Activated CD8-positive, alpha-beta T cell treated with anti-CD3 and anti-CD28 coated beads, Interleukin-2, amount 10 ng/mL, durations not matched to agents 7 days and 5 days (primary cell): ENCODE measurements at regions of chr11 and their contacts with region 1.

Region 1: GRCh38 chr11:62805076-62805892 is at the start of gene NXF1:
- DNase-seq: peak; percentile 95
- ATAC-seq: peak; percentile 81
- H3K4me3 Mint-ChIP-seq: peak within 1 kb of the TSS; percentile 99
- H3K27ac Mint-ChIP-seq: peak within 1 kb of the TSS; percentile 95
- H3K4me1 Mint-ChIP-seq: peaks cover 37% of the 10 kb centered on the region
- H3K27me3 Mint-ChIP-seq: no peaks in the 10 kb centered on the region
- total RNA-seq, gene NXF1: 110 to 111 TPM

Region 2: GRCh38 chr11:62753736-62754603 is 51.3 kb before region 1 on chr11 and contains the start of gene ZBTB3:
- CTCF ChIA-PET with region 1: interaction called, 3 read pairs
- POLR2A ChIA-PET with region 1: interaction called, 10 read pairs
- DNase-seq: peak; percentile 99
- ATAC-seq: peak; percentile 99
- H3K4me3 Mint-ChIP-seq: peak within 1 kb of the TSS; percentile 94
- H3K27ac Mint-ChIP-seq: peak within 1 kb of the TSS; percentile 97
- H3K4me1 Mint-ChIP-seq: peaks cover 31% of the 10 kb centered on the region
- H3K27me3 Mint-ChIP-seq: no peaks in the 10 kb centered on the region
- total RNA-seq, gene ZBTB3: 12.4 to 12.8 TPM

Region 3: GRCh38 chr11:62831520-62832335 is 26.4 kb after region 1 on chr11 and contains the start of gene STX5:
- CTCF ChIA-PET with region 1: interaction called, 5 read pairs
- POLR2A ChIA-PET with region 1: interaction called, 10 read pairs
- DNase-seq: peak; percentile 100
- ATAC-seq: peak; percentile 91
- H3K4me3 Mint-ChIP-seq: peak within 1 kb of the TSS; percentile 92
- H3K27ac Mint-ChIP-seq: peak within 1 kb of the TSS; percentile 98
- H3K4me1 Mint-ChIP-seq: peaks cover 39% of the 10 kb centered on the region
- H3K27me3 Mint-ChIP-seq: no peaks in the 10 kb centered on the region
- total RNA-seq, gene STX5: 30.4 to 32.7 TPM